ENCODE measurements at regions of chr3 and their contacts with region 1.

Region 1: DNA sequence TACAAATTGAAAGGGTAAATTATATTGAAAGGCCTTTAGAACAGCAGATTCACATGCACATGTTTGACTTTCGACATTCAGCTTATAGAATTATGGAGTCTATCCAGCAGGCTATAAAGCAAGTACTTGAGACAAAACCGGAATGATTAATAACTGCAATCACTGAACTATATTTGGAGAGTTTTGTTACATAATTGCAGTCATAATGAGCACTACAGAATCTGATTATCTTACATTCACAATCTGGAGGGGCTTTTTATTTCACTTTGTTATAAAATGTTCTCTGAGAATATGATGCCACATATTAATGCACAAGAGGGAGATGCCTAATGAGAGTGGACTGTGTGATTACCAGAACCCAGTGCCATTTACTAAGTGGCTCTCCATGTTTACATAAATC is 64.3 kb downstream of the NSUN3 start:
- DNase-seq: no peak
- ATAC-seq: no peak
- H3K4me3 ChIP-seq: no peak overlapping the region
- H3K4me3 Mint-ChIP-seq: no peak overlapping the region
- H3K27ac ChIP-seq: no peak overlapping the region
- H3K27ac Mint-ChIP-seq: no peak overlapping the region
- H3K4me1 ChIP-seq: no peaks in the 10 kb centered on the region
- H3K4me1 Mint-ChIP-seq: peaks cover 0 to 11% (median 0%) of the 10 kb centered on the region in 3 donors
- H3K27me3 ChIP-seq: no peaks in the 10 kb centered on the region
- H3K27me3 Mint-ChIP-seq: no peaks in the 10 kb centered on the region

Region 2: DNA sequence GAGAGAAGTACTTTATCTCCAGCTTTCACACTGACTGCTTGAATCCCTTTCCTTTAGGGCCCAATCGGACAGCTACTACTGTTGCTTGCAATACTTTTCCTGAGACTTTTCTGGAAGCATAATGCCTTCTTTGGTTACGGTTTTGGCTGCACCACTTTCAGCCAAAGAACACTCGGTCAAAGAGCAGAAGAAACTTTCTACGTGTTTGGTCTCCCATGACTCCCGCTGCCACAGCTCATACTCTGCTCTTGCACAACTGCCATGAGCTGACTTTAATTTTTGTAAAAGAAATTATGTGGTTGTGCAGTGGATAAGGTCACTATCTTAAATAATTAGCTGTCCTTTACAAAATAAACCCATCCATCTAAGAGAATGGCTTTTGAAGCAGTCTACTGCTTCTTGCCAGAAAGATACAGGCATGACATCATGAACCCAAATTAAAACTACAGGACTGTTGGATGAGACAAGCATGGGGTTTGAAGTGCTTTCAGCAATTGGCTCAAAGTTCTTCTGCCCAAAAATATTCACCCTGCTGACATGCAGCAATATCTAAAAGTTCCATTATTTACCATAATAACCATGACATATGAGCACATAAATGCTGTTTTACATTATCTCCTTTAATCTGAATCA is 195.4 kb before region 1 on chr3:
- CTCF ChIA-PET with region 1: no interaction called
- POLR2A ChIA-PET with region 1: interaction called in 1 of 2 experiments, 10 read pairs
- DNase-seq: no peak
- ATAC-seq: no peak
- H3K4me3 ChIP-seq: no peak overlapping the region
- H3K4me3 Mint-ChIP-seq: no peak overlapping the region
- H3K27ac ChIP-seq: no peak overlapping the region
- H3K27ac Mint-ChIP-seq: no peak overlapping the region
- H3K4me1 ChIP-seq: no peaks in the 10 kb centered on the region
- H3K4me1 Mint-ChIP-seq: no peaks in the 10 kb centered on the region
- H3K27me3 ChIP-seq: peaks cover 0 to 6% of the 10 kb centered on the region in 2 experiments
- H3K27me3 Mint-ChIP-seq: no peaks in the 10 kb centered on the region

Region 3: DNA sequence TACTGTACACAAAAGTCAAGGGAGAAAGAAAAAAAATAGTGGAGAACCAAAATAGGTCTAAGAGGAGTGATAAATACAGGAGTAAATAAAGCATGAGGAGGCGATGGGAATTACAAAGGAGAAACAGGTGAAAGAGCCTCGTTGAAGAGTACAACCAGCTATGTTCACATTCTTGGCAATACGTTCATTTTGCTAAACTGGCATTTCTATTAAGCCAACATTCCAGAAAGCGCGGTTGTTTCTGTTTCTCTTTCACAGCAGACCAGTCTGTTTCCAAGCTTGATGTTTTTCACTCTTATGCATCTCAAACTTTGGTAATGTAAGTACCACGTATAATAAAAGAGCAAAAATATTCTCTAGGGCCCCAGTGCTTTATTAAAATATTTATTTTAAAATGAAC is 10.3 kb after region 1 on chr3:
- CTCF ChIA-PET with region 1: no interaction called
- POLR2A ChIA-PET with region 1: interaction called in 1 of 2 experiments, 18 read pairs
- DNase-seq: no peak
- ATAC-seq: no peak
- H3K4me3 ChIP-seq: no peak overlapping the region
- H3K4me3 Mint-ChIP-seq: no peak overlapping the region
- H3K27ac ChIP-seq: no peak overlapping the region
- H3K27ac Mint-ChIP-seq: no peak overlapping the region
- H3K4me1 ChIP-seq: no peaks in the 10 kb centered on the region
- H3K4me1 Mint-ChIP-seq: no peaks in the 10 kb centered on the region
- H3K27me3 ChIP-seq: peaks cover 0 to 3% of the 10 kb centered on the region in 2 experiments
- H3K27me3 Mint-ChIP-seq: peaks cover 0 to 8% of the 10 kb centered on the region in 2 donors

Measured in T-cell (primary cell).